Aorta (tissue), 5 donors: ENCODE measurements at regions of chr6 and their contacts with region 1.

Region 1: DNA sequence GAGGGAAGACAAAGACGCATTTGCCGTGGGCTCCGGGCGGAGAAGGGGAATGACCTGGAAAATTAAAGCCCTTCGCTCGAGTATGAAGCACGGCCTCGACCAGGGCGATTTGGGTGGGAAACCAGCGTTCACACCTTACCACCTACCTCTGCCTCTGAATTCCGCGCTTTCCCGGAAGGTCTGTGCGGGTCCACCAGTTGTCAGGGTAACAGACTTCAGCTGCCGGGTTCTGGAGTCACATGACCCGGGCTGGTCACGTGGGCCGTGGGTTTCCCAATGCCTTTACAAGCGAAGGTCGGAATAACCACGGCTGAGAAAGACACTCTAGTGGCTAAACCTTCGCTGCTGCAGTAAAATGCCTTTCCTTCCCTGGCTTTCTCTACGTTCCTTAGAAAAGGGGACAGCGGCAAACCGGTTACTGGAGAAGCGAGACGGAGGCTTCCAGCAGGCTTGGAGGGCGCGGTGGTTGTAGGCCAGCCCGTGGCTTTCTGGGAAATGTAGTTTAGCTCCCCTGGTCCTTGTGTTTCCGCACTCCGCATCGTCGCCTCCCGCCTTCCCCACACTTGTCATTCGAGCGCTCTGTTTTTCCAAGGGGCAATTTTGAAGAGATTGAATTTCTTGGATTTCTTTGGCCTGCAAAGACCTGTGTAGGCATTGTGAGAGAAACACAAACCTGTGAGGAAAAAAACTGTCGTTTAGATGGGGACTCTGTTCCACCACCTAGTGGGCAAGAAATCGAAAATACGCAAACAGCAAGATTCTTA is at the start of gene CEP162:
- DNase-seq: peak; percentile 95 to 98
- ATAC-seq: peak; percentile 97
- H3K4me3 ChIP-seq: peak within 1 kb of the TSS; percentile 42 to 56
- H3K27ac ChIP-seq: peak within 1 kb of the TSS in 1 of 2 donors; percentile 73
- H3K4me1 ChIP-seq: peaks cover 0 to 3% of the 10 kb centered on the region in 2 donors
- H3K27me3 ChIP-seq: no peaks in the 10 kb centered on the region
- total RNA-seq, gene CEP162: 8.5 to 14.3 TPM

Region 2: GRCh38 chr6:83615025-83615999 is 612.3 kb before region 1 on chr6:
- intact Hi-C with region 1: loop called (anchors 5 kb)
- DNase-seq: no peak
- ATAC-seq: peak; percentile 36
- H3K4me3 ChIP-seq: no peak overlapping the region
- H3K27ac ChIP-seq: no peak overlapping the region
- H3K4me1 ChIP-seq: no peaks in the 10 kb centered on the region
- H3K27me3 ChIP-seq: no peaks in the 10 kb centered on the region

Region 3: DNA sequence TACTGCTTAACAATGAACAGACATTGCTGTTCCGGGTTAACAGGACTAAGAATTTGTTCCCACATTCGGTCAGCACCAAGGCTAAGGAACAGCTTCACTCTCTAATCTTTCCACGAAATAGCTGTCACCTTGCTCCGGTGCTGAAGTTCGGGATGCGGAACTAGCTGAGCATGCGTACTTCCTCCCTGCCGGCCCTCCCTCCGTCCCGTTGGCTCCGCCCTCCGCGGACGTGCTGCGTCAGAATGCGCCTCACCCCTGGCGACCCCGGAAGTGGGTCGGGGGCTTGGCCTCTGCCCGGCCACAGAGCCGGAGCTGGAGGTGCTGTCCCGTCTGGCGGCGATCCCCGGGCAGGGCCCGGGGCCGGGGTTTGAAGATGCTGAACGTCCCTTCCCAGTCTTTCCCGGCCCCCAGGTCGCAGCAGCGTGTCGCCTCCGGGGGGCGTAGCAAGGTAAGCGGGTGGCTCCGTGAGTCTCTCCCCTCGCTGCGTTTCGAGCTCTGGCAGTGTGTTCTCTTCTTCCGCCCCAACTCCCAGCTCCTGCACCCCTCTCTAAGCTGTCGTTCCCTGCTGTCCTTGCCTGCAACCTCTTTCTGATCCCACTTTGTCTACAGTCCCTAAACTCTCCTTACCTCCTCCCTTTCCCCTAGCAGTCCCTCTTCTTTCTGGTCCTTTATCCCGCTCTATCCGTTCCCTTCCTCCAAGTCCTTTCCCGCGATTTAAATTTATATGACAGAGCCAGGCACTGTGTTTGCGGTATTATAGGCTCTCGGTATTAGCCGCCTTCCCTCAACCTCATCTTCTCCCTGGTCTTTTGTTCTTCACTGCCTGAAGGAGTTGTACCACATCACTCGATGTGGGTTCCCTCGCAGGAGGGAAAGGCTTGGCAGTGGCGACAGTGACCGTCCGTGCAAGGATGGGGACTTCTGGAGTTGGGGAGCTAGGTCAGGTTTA is 367.9 kb before region 1 on chr6 and contains the start of gene CYB5R4:
- intact Hi-C with region 1: loop called in 1 of 2 experiments (anchors 5 kb)
- DNase-seq: peak; percentile 97 to 99
- ATAC-seq: peak; percentile 99
- H3K4me3 ChIP-seq: peak within 1 kb of the TSS; percentile 51 to 78
- H3K27ac ChIP-seq: peak within 1 kb of the TSS in 1 of 2 donors; percentile 65
- H3K4me1 ChIP-seq: peaks cover 0 to 10% of the 10 kb centered on the region in 2 donors
- H3K27me3 ChIP-seq: no peaks in the 10 kb centered on the region
- total RNA-seq, gene CYB5R4: 19.4 to 22.8 TPM

Region 4: DNA sequence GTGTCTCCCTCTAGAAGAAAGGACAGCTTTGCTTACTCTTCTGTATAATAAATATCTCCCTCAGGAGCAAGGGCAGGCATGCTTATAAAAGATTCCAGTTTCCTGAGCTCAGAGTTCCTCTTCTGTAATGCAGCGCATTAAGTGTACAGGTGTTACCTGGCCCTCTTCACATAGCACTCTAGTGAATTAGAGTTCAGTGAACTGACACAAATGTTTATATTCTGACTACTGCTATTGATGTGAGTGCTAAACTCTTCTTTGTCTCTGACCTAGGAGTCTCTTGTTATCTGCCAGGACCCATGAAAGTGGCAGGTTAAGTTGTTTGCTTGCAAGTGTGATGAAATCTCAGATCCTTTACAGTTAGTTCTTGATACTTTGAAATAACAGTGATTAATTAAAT is 334.6 kb before region 1 on chr6:
- intact Hi-C with region 1: no loop called
- DNase-seq: no peak
- ATAC-seq: no peak
- H3K4me3 ChIP-seq: no peak overlapping the region
- H3K27ac ChIP-seq: no peak overlapping the region
- H3K4me1 ChIP-seq: no peaks in the 10 kb centered on the region
- H3K27me3 ChIP-seq: no peaks in the 10 kb centered on the region

Region 5: DNA sequence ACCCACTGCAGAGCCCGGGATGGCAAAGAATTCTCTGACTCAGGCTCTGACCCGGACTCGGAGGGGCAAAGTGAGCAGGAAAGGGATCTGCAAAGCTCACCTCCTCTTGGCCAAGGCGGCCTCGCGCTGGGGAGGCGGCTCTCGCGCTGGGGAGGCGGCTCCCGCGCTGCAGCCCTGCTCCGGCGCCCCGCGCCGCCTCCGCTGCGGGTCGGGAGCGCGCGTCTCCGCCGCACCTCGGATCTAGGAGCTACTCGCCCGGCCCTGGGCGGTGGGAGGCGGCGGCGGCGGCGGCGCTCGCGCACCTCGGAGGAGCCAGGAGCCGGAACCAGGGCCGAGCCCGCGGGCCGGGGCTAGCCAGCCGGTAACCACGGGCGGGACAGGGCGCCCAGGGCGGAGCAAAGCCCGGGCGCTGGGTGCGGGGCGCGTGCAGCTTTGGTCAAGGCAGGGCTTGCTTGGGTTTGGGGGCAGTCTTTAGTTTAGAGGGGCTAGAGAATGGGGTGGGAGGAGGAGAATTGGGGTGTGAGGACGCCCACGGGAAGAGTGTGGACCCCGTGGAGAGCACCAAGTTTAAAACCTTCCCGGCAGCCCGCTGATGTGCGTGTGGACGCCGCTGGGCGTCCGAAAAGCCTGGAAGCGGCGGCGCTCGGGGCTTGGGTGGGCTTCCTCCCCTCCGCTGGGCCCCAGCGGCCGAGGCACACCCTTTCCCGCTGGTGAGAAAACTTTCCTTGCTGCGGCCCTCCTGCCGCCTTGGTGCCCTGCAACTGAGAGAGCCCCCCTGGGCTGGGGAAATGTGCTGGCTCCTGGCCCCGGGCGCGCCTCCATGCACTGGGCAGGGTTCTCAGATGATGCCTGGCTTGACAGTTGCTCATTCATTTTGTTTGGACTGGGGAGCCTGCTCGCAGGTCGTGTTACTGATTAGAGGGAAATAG is 193.8 kb before region 1 on chr6 and contains the start of gene MRAP2:
- intact Hi-C with region 1: no loop called
- DNase-seq: peak; percentile 60 to 85
- ATAC-seq: peak; percentile 77
- H3K4me3 ChIP-seq: peak within 1 kb of the TSS; percentile 91
- H3K27ac ChIP-seq: peak within 1 kb of the TSS; percentile 36 to 92
- H3K4me1 ChIP-seq: peaks cover 5 to 11% of the 10 kb centered on the region in 2 donors
- H3K27me3 ChIP-seq: no peaks in the 10 kb centered on the region
- total RNA-seq, gene MRAP2: 65.1 to 74.4 TPM

Region 6: DNA sequence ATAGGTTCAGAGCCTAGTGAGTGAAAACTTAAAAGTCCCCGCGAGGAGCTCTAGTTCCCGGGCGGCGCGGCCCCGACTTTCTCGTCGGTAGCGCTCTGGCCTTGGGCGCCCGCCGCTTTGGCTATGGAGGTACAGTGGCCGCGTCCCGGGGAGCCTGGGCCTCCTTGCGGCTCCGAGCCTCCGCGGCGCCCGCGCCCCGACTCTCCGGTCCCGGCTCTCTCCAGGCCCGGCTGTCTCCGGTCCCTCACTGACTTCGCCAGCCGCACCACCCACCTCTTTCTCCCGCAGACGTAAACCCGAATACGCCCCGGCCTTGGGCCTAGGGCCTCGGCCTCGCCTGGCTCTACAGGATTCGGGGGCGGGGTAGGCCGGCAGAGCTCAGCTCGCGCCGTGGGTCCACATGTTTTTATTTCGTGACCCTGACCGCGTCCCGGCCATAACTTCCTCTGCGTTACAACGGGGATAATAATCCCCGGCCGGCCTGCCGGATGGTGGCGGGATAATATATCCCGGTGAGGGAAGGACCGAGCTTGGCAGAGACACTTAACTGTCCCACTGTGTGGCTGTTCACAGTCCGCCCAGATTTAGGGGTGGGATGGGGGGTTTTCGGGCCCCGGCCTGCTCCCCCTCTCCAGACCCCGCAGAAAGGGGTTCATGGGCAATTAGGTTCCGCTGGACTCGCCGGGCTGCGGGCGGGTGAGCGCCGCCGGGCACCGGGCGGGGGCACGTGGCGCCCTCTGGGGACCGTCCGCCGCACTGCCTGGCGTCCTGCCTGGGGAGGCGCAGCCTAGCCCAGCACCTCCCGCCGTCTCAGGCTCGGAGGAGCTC is 546.8 kb after region 1 on chr6:
- intact Hi-C with region 1: loop called in 1 of 2 experiments (anchors 10 kb)
- DNase-seq: peak; percentile 72 to 93
- ATAC-seq: peak; percentile 91
- H3K4me3 ChIP-seq: peak overlapping the region; percentile 22 to 55
- H3K27ac ChIP-seq: peak overlapping the region; percentile 83 to 89
- H3K4me1 ChIP-seq: no peaks in the 10 kb centered on the region
- H3K27me3 ChIP-seq: no peaks in the 10 kb centered on the region

Region 7: DNA sequence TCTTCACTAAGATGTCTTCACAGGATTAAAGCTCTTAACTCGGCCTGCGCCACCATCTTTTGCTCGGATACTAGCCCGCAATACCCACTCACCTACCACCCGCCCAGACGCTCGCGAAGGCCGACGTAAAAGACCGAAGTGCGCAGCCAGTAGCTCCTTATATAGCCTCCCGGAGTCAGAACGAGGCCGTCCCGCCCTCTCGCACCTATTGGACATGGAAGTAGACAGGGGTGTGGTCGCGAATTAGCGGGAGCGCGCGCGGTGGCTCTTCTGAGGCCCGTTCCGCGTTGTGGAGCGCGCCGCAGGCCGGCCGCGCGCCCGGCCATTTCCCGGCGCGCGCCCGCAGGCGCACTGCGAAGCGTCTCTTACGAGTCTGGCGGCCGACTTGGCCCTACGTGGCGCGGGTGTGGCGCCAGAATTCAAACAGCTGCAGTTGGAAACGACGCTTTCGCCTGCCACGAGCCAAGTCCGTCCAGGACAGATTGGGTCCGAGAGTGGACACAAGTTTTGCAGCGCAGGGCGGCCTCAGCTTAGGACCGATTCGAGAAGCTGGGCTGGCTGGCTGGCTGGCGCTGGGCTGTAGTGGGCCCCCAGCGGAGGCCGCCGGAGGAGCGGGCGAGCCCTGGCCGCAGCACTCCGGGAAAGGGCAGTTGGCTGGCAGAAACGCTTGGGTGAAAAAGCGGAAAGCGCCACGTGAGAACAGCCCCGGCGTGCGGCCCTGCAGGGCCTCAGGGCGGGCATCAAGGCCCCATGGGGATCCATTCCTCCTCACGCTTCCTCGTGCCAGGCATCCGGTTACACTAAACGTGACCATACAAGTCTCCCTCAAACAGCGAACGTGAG is 1451.2 kb after region 1 on chr6:
- intact Hi-C with region 1: loop called in 1 of 2 experiments (anchors 5 kb)
- DNase-seq: peak; percentile 98 to 99
- ATAC-seq: peak; percentile 99
- H3K4me3 ChIP-seq: peak overlapping the region; percentile 88 to 97
- H3K27ac ChIP-seq: peak overlapping the region; percentile 53 to 85
- H3K4me1 ChIP-seq: peaks cover 6 to 9% of the 10 kb centered on the region in 2 donors
- H3K27me3 ChIP-seq: peaks cover 0 to 2% of the 10 kb centered on the region in 2 donors